ENCODE measurements at regions of chr3 and their contacts with region 1.

Region 1: DNA sequence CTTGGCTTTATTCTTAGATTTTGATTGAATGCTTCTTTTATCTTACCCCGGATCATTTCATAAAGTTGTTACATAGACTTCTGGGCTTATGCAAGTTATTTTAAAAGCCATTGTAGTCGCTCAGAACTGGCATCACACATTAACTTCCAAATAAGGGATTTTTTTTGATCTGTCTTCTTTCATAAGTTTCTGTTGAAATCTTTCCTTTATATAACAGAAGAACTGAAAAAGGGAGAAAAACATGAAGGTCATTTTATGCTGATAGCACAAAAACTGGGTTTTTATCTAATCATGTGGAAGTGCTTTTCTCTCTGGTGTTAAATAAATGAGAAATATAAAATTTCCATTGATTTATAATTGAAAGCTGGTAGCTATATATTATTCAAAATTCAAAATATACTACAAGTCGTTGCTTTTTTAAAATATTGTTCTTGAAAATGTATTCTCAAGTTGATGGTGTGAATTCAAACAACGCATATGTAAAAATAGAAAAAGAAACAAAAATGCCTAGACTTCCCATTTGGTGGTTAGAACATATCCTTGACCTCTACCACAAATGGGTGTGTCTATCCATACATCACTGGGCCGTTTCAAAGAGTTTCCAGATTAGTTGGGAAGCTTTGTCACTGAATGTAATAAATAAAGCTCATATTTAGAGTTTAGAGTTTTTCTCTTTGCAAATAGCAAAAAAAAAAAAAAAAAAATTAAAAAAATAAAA is 258.3 kb upstream of the ZPLD1 start:
- DNase-seq: no peak
- ATAC-seq: no peak
- H3K4me3 ChIP-seq: no peak overlapping the region
- H3K27ac ChIP-seq: no peak overlapping the region
- H3K4me1 ChIP-seq: 0 out of 2 replicates have a peak, but pooled peaks cover 2% of the 10 kb centered on the region
- H3K27me3 ChIP-seq: no peaks in the 10 kb centered on the region
- CTCF ChIP-seq: no peak

Region 2: GRCh38 chr3:101720851-101721649 is 455.4 kb before region 1 on chr3:
- CTCF ChIA-PET with region 1: interaction called, 10 read pairs
- POLR2A ChIA-PET with region 1: no interaction called
- in situ Hi-C with region 1: no loop called
- intact Hi-C with region 1: no loop called
- DNase-seq: no peak
- ATAC-seq: no peak
- H3K4me3 ChIP-seq: no peak overlapping the region
- H3K27ac ChIP-seq: no peak overlapping the region
- H3K4me1 ChIP-seq: peaks cover 3% of the 10 kb centered on the region; the same call in 1 of the 2 replicates
- H3K27me3 ChIP-seq: no peaks in the 10 kb centered on the region
- CTCF ChIP-seq: no peak

Region 3: DNA sequence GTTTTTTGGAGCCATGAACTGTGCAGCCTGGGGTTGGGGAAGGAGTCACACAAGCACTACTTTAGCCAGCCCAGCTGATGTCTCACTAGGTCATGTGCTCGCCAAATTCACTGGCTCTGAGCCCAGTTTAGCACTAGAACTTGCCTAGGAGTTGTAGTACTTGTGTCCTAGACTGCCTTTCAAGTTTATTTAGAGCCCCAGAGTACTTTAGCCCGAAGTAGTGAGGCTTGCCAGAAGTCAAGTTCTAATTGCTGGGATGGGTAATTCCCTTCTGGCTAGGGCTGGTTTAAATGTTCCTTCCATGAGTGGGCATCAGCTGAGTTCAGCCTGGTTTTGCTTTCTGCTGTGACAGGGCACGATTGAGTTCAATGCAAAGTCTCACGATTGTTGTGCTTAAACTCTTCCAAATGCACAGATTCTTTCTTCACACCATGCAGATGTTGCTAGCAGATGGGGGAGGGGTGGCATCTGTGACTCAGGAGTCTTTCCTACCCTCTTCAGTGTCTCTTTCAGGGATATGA is 30.1 kb after region 1 on chr3:
- CTCF ChIA-PET with region 1: no interaction called
- POLR2A ChIA-PET with region 1: no interaction called
- in situ Hi-C with region 1: no loop called
- intact Hi-C with region 1: no loop called
- DNase-seq: no peak
- ATAC-seq: no peak
- H3K4me3 ChIP-seq: no peak overlapping the region
- H3K27ac ChIP-seq: no peak overlapping the region
- H3K4me1 ChIP-seq: no peaks in the 10 kb centered on the region
- H3K27me3 ChIP-seq: no peaks in the 10 kb centered on the region
- CTCF ChIP-seq: no peak

Region 4: GRCh38 chr3:102269406-102269805 is 92.9 kb after region 1 on chr3:
- CTCF ChIA-PET with region 1: no interaction called
- POLR2A ChIA-PET with region 1: no interaction called
- in situ Hi-C with region 1: no loop called
- intact Hi-C with region 1: no loop called
- DNase-seq: no peak
- ATAC-seq: no peak
- H3K4me3 ChIP-seq: no peak overlapping the region
- H3K27ac ChIP-seq: no peak overlapping the region
- H3K4me1 ChIP-seq: no peaks in the 10 kb centered on the region
- H3K27me3 ChIP-seq: no peaks in the 10 kb centered on the region
- CTCF ChIP-seq: no peak

Region 5: DNA sequence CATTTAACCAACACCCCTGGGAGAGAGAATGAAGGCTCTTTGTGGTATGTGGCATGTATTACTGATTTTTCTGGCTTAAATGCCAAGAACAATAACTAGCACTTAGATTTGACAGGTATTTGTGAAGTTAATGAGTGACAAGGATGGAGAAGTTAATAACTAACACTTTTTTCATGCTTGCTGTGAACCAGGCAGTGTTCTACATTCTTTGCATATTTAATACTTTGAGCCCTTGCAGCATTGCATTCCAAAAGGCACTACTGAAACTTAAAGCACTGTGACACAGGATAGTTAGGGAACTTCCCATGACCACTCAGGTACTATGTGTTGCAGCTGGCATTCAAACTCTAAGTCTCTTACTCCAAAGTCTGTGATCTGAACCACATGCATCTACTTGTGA is 909.0 kb after region 1 on chr3:
- CTCF ChIA-PET with region 1: no interaction called
- POLR2A ChIA-PET with region 1: interaction called, 11 read pairs
- in situ Hi-C with region 1: no loop called
- intact Hi-C with region 1: no loop called
- DNase-seq: no peak
- ATAC-seq: no peak
- H3K4me3 ChIP-seq: no peak overlapping the region
- H3K27ac ChIP-seq: no peak overlapping the region
- H3K4me1 ChIP-seq: no peaks in the 10 kb centered on the region
- H3K27me3 ChIP-seq: no peaks in the 10 kb centered on the region
- CTCF ChIP-seq: no peak